H1 (cell line): ENCODE measurements at regions of chr10 and their contacts with region 1.

Region 1: DNA sequence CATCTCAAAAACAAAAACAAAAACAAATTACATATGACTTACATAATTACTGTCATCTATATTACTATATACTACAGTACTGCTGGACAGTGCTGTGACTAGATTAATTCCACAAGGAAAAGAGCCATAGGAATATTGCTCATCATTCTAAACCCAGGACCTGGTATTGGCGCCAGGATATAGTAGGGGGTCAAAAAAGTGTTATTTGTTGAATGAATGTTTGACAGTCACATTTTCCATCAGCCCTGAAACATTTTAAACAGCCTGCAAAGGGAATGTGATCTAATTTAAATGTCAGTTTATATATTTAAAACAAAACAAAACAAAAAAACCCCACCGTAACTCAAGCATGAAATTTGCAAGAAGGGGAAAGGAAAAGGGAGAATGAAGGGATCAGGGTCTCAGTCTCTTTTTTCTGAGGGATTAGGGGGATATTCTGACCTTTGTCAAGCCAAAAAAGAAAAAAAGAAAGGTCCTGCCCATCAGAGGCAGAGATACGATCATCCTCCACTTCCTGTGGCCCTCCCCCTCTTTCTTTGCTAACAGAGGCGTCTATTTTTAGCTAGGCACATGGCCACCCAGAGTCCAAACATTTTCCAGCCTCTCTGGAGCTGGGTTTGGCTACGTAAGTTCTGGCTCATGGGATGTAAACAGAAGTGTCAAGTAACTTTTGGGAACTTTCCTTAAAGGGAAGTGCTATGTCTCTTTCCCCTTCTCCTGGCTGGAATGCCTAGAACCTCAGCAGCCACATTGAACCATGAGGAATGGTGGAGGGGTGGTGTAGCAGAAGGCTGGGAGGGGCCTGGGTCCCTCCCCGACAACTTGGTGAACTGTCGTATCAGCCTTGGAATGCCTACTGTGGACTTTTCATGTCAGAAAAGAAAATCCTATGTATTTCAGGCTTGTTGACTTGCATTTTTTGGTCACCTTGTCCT is 44.6 kb upstream of the DLG5 start:
- DNase-seq: no peak
- H3K4me3 ChIP-seq: no peak overlapping the region
- H3K27ac ChIP-seq: peak overlapping the region; percentile 27; the same call in 1 of the 2 replicates
- H3K4me1 ChIP-seq: peaks cover 0 to 6% (median 0%) of the 10 kb centered on the region in 4 experiments; a peak in 2 of 7 replicates
- H3K27me3 ChIP-seq: no peaks in the 10 kb centered on the region
- CTCF ChIP-seq: no peak
- EP300 ChIP-seq: no peak
- POLR2A ChIP-seq: no peak
- RAD21 ChIP-seq: no peak

Region 2: GRCh38 chr10:77837240-77837924 is 133.8 kb before region 1 on chr10:
- CTCF ChIA-PET with region 1: interaction called, 19 read pairs
- POLR2A ChIA-PET with region 1: no interaction called
- DNase-seq: peak in 1 of 2 experiments; percentile 83
- H3K4me3 ChIP-seq: no peak overlapping the region
- H3K27ac ChIP-seq: peak overlapping the region; percentile 52; the same call in 1 of the 2 replicates
- H3K4me1 ChIP-seq: peaks cover 3 to 7% (median 4%) of the 10 kb centered on the region in 4 experiments
- H3K27me3 ChIP-seq: no peaks in the 10 kb centered on the region
- CTCF ChIP-seq: peak; percentile 47 to 69 (median 64)
- EP300 ChIP-seq: no peak
- POLR2A ChIP-seq: no peak
- RAD21 ChIP-seq: peak; percentile 35 to 59; a peak in 3 of 4 replicates

Region 3: DNA sequence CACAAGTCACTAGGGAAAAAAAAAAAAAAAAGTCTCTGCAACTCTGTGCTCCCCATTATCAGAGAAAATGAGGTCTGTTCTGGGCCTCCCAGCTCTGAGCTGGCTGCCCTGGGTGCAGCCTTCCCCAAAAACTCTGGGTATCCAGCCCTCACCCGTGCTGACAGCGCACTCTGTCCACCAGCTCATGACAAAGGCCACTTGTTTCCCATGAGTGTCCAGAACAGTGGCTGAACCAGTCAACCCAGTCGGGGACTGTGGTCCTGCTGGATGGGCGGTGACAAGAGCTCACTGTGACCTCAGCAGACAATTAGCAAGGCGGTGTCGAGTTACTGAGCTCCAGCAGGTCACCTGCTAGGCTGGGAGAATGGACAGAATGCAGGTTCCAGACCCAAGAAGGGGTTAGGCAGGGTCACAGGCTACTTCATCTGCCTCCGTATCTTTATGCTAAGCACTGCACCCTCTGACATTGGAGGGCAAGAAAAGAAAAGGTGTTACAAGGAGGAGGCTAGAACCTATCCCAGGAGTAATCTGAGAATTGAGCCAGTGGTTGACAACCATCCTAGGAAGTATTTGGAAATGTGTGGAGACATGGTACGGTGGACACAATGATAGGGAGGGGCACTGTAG is 81.7 kb before region 1 on chr10:
- CTCF ChIA-PET with region 1: interaction called, 117 read pairs
- POLR2A ChIA-PET with region 1: interaction called, 4 read pairs
- DNase-seq: no peak
- H3K4me3 ChIP-seq: peak overlapping the region in 2 of 4 experiments; percentile 7 to 24; a peak in 2 of 8 replicates
- H3K27ac ChIP-seq: peak overlapping the region; percentile 28; the same call in 1 of the 2 replicates
- H3K4me1 ChIP-seq: peaks cover 28 to 51% (median 31%) of the 10 kb centered on the region in 4 experiments
- H3K27me3 ChIP-seq: no peaks in the 10 kb centered on the region
- CTCF ChIP-seq: no peak
- EP300 ChIP-seq: no peak
- POLR2A ChIP-seq: no peak
- RAD21 ChIP-seq: no peak

Region 4: GRCh38 chr10:77919708-77920099 is 51.4 kb before region 1 on chr10:
- CTCF ChIA-PET with region 1: interaction called, 18 read pairs
- POLR2A ChIA-PET with region 1: interaction called, 26 read pairs
- DNase-seq: no peak
- H3K4me3 ChIP-seq: no peak overlapping the region
- H3K27ac ChIP-seq: no peak overlapping the region
- H3K4me1 ChIP-seq: peaks cover 0 to 12% (median 4%) of the 10 kb centered on the region in 4 experiments; a peak in 5 of 7 replicates
- H3K27me3 ChIP-seq: no peaks in the 10 kb centered on the region
- CTCF ChIP-seq: no peak
- EP300 ChIP-seq: no peak
- POLR2A ChIP-seq: no peak
- RAD21 ChIP-seq: no peak

Region 5: GRCh38 chr10:77949167-77949566 is 22.0 kb before region 1 on chr10:
- CTCF ChIA-PET with region 1: interaction called, 15 read pairs
- POLR2A ChIA-PET with region 1: interaction called, 8 read pairs
- DNase-seq: peak; percentile 79 to 82
- H3K4me3 ChIP-seq: peak overlapping the region in 1 of 4 experiments; percentile 12; a peak in 2 of 8 replicates
- H3K27ac ChIP-seq: peak overlapping the region; percentile 52; the same call in 1 of the 2 replicates
- H3K4me1 ChIP-seq: peaks cover 8 to 13% (median 11%) of the 10 kb centered on the region in 4 experiments
- H3K27me3 ChIP-seq: no peaks in the 10 kb centered on the region
- CTCF ChIP-seq: no peak
- EP300 ChIP-seq: no peak
- POLR2A ChIP-seq: peak; percentile 48 to 56; a peak in 2 of 3 replicates
- RAD21 ChIP-seq: no peak

Region 6: GRCh38 chr10:77989081-77989724 is 18.1 kb after region 1 on chr10:
- CTCF ChIA-PET with region 1: interaction called, 38 read pairs
- POLR2A ChIA-PET with region 1: interaction called, 3 read pairs
- DNase-seq: no peak
- H3K4me3 ChIP-seq: no peak overlapping the region
- H3K27ac ChIP-seq: no peak overlapping the region
- H3K4me1 ChIP-seq: peaks cover 0 to 2% (median 0%) of the 10 kb centered on the region in 4 experiments; a peak in 2 of 7 replicates
- H3K27me3 ChIP-seq: no peaks in the 10 kb centered on the region
- CTCF ChIP-seq: no peak
- EP300 ChIP-seq: no peak
- POLR2A ChIP-seq: no peak
- RAD21 ChIP-seq: no peak